Upper lobe of right lung (tissue), 1 donor: ENCODE measurements at regions of chr3 and their contacts with region 1.

Region 1: DNA sequence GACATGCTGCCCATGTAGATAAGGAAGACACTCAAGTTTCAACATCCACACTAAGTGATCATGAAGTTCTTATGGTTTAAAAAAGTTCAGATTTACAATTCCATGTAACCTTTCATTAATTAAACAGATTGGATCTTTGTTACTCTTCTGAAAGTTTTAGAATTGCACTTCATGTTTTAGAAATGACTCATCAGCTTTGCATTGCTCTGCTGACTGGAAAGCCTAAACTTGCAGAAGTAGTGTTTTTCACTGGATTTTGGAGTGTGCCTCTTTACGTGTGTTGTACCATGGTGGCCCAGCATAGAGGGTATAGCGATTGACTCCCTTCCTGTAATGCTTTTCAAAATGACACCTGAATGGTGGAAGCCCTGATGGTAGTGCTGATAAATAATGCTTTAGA is 157.9 kb downstream of the BBX start:
- DNase-seq: no peak
- ATAC-seq: no peak
- H3K4me3 ChIP-seq: no peak overlapping the region
- H3K27ac ChIP-seq: no peak overlapping the region
- H3K4me1 ChIP-seq: peaks cover 28% of the 10 kb centered on the region
- H3K27me3 ChIP-seq: no peaks in the 10 kb centered on the region
- CTCF ChIP-seq: no peak

Region 2: GRCh38 chr3:107740992-107741896 is 60.5 kb after region 1 on chr3:
- intact Hi-C with region 1: loop called (anchors 10 kb)
- DNase-seq: no peak
- ATAC-seq: no peak
- H3K4me3 ChIP-seq: no peak overlapping the region
- H3K27ac ChIP-seq: no peak overlapping the region
- H3K4me1 ChIP-seq: no peaks in the 10 kb centered on the region
- H3K27me3 ChIP-seq: no peaks in the 10 kb centered on the region
- CTCF ChIP-seq: peak; percentile 58